ENCODE measurements at regions of chr1 and their contacts with region 1.

Region 1: GRCh38 chr1:45246760-45247159 is 40.4 kb upstream of the ZSWIM5 start:
- DNase-seq: peak; percentile 91
- ATAC-seq: peak; percentile 86
- H3K4me3 ChIP-seq: no peak overlapping the region
- H3K27ac ChIP-seq: no peak overlapping the region; the same call in 1 of the 2 replicates
- H3K4me1 ChIP-seq: no peaks in the 10 kb centered on the region; the same call in 1 of the 2 replicates
- H3K27me3 ChIP-seq: no peaks in the 10 kb centered on the region; the same call in 1 of the 2 replicates
- CTCF ChIP-seq: no peak
- POLR2A ChIP-seq: no peak
- RAD21 ChIP-seq: no peak

Region 2: DNA sequence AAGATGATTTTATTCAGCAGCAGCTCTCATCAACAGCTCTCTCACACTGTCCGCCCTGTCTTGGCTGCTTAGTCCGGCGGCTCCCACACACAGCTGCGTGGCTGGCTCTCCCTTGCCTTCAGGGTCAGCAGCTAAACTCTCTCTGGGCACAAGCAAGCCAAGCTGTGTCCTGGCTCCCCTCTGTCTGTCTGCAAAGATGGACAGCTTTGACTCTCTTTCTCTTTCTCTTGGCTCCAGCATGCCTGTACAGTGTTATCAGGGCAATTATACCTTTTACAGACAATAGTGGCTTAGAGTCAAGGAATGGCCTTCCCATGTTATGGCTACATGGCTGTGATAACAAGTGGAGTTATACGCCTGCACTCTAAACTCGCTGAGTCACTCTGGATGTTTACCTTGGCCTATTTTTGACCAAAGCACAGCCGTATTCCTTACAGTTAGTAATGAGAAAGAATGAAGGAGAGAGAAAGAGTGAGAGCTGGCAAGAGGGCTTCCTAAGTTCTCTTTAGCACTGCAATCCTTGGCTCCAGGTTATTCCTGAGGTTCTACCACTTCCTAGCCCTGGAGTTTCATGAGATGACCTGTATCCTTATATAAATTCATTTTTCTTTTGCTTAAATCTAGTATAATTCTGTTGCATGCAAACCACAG is 19.5 kb after region 1 on chr1:
- CTCF ChIA-PET with region 1: no interaction called
- POLR2A ChIA-PET with region 1: no interaction called
- dilution Hi-C with region 1: no loop called
- in situ Hi-C with region 1: no loop called
- intact Hi-C with region 1: loop called (anchors 1 kb)
- DNase-seq: peak; percentile 91
- ATAC-seq: peak; percentile 93
- H3K4me3 ChIP-seq: no peak overlapping the region
- H3K27ac ChIP-seq: peak overlapping the region; percentile 79
- H3K4me1 ChIP-seq: peaks cover 8% of the 10 kb centered on the region
- H3K27me3 ChIP-seq: no peaks in the 10 kb centered on the region
- CTCF ChIP-seq: no peak
- POLR2A ChIP-seq: no peak
- RAD21 ChIP-seq: no peak

Region 3: DNA sequence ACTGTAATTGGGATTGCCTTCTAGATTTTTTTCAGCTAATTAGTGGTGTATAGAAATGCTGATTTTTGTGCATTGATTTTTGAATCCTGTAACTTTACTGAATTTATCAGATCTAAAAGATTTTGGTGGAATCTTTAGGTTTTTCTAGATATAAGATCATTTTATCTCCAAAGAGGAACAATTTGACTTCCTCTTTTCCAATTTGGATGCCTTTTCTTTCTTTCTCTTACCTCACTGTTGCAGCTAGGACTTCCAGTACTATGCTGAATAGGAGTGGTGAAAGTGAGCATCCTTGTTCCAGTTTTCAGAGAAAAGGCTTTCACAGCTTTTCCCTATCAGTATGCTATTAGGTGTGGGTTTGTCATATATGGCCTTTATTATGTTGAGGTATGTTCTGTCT is 190.6 kb after region 1 on chr1:
- CTCF ChIA-PET with region 1: no interaction called
- POLR2A ChIA-PET with region 1: no interaction called
- dilution Hi-C with region 1: no loop called
- in situ Hi-C with region 1: no loop called
- intact Hi-C with region 1: no loop called
- DNase-seq: no peak
- ATAC-seq: no peak
- H3K4me3 ChIP-seq: no peak overlapping the region
- H3K27ac ChIP-seq: no peak overlapping the region
- H3K4me1 ChIP-seq: peaks cover 3% of the 10 kb centered on the region
- H3K27me3 ChIP-seq: no peaks in the 10 kb centered on the region
- CTCF ChIP-seq: no peak
- POLR2A ChIP-seq: no peak
- RAD21 ChIP-seq: no peak